ENCODE measurements at regions of chr1 and their contacts with region 1.

Region 1: GRCh38 chr1:26874896-26875295 is 11.9 kb downstream of the SFN start:
- DNase-seq: no peak
- ATAC-seq: no peak
- H3K4me3 ChIP-seq: no peak overlapping the region
- H3K27ac ChIP-seq: no peak overlapping the region
- H3K4me1 ChIP-seq: peaks cover 9 to 63% of the 10 kb centered on the region in 2 experiments
- H3K27me3 ChIP-seq: no peaks in the 10 kb centered on the region
- CTCF ChIP-seq: no peak
- POLR2A ChIP-seq: no peak
- RAD21 ChIP-seq: no peak

Region 2: GRCh38 chr1:26811057-26811456 is 63.8 kb before region 1 on chr1:
- CTCF ChIA-PET with region 1: interaction called, 11 read pairs
- POLR2A ChIA-PET with region 1: no interaction called
- RAD21 ChIA-PET with region 1: no interaction called
- intact Hi-C with region 1: loop called (anchors 1 kb)
- DNase-seq: no peak
- ATAC-seq: no peak
- H3K4me3 ChIP-seq: no peak overlapping the region
- H3K27ac ChIP-seq: no peak overlapping the region
- H3K4me1 ChIP-seq: peaks cover 0 to 14% of the 10 kb centered on the region in 2 experiments; a peak in 1 of 4 replicates
- H3K27me3 ChIP-seq: no peaks in the 10 kb centered on the region
- CTCF ChIP-seq: no peak
- POLR2A ChIP-seq: no peak
- RAD21 ChIP-seq: no peak

Region 3: DNA sequence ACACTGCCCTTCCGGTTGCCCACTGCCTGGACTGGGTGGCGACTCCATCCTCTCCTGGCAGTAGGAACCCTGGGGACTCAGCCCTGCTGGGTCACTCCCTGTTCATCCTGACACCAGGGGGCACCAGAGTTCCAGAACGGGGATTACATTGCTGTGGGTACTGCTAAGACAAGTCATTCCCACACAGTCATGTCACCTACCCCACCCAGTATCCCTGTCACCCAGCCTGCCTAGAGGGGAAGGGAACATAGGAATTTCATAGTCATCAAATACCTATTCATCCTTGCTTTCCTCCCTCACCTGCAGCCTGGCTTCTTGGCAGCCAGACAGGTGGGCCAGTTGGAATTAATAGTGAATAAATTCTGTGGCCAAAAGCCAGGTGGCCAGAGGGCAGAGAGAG is 21.7 kb before region 1 on chr1:
- CTCF ChIA-PET with region 1: interaction called, 6 read pairs
- POLR2A ChIA-PET with region 1: interaction called, 3 read pairs
- RAD21 ChIA-PET with region 1: interaction called, 3 read pairs
- intact Hi-C with region 1: loop called (anchors 1 kb)
- DNase-seq: peak; percentile 84
- ATAC-seq: peak; percentile 85
- H3K4me3 ChIP-seq: no peak overlapping the region
- H3K27ac ChIP-seq: peak overlapping the region; percentile 51
- H3K4me1 ChIP-seq: peaks cover 37 to 73% of the 10 kb centered on the region in 2 experiments
- H3K27me3 ChIP-seq: no peaks in the 10 kb centered on the region
- CTCF ChIP-seq: peak in 2 of 3 experiments; percentile 92; a peak in 4 of 6 replicates
- POLR2A ChIP-seq: no peak
- RAD21 ChIP-seq: no peak

Region 4: DNA sequence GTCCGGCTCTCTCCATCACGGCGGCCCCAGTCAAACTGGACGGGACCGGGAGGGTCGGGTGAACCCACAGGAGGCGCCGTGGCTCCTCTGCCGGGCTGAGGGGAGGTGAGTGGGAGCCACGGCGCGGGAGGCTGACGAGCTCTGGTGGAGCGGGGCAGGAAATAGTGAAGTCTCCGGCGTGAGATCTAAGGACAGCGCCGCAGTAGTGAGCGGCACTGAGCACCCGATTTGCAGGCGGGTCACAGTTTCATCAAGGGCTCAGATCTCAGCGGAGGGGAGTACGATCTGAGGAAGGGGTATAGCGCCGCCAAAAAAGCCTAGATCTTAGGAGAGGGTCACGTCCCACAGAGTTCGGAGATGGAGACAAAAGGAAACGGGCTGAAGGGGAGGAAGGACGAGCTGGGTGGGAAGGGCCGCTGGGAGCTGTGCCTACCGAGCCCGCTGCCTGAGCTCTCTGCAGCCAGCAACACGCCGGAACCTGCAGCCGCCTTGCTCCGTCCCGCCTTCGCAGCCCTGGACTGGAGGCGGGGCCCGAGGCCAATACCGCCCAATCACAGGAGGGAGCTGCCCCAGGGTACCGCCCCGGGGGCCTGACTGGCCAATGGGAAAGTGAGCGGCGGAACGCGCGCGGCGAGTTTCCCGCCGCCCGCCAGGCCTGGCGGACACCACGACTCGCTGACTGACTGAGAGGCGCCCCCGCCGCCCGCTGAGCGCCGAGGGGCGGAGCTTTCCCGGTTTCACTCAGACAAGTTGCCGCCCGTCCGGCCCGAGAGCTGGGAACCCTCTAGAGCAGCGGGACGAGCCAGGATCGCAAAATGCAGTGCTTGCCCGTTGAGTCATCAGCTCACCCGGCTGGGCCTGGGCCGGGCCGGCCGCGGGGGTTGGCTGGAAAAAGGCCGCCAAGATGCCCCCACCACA is 10.0 kb before region 1 on chr1:
- CTCF ChIA-PET with region 1: interaction called, 10 read pairs
- POLR2A ChIA-PET with region 1: interaction called, 10 read pairs
- RAD21 ChIA-PET with region 1: interaction called, 5 to 9 read pairs
- intact Hi-C with region 1: no loop called
- DNase-seq: peak; percentile 95
- ATAC-seq: peak; percentile 72
- H3K4me3 ChIP-seq: peak overlapping the region; percentile 88 to 96
- H3K27ac ChIP-seq: peak overlapping the region; percentile 100
- H3K4me1 ChIP-seq: peaks cover 42 to 62% of the 10 kb centered on the region in 2 experiments
- H3K27me3 ChIP-seq: no peaks in the 10 kb centered on the region
- CTCF ChIP-seq: no peak
- POLR2A ChIP-seq: peak; percentile 95
- RAD21 ChIP-seq: no peak

Region 5: DNA sequence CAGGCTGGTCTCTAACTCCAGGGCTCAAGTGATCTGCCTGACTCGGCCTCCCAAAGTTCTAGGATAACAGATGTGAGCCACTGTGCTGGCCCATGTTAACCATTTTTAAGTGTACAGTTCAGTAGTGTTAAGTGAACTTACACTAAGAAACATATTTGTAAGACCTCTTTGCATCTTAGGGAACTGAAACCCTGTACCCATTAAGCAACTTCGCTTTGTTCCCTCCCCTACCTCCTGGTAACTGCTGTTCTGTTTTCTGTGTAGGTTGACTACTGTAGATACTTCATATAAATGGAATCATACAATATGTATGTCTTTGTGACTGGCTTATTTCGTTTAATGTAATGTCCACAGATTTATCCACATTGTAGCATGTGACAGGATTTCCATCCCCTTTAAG is 57.6 kb after region 1 on chr1:
- CTCF ChIA-PET with region 1: no interaction called
- POLR2A ChIA-PET with region 1: no interaction called
- RAD21 ChIA-PET with region 1: no interaction called
- intact Hi-C with region 1: no loop called
- DNase-seq: no peak
- ATAC-seq: no peak
- H3K4me3 ChIP-seq: no peak overlapping the region
- H3K27ac ChIP-seq: no peak overlapping the region
- H3K4me1 ChIP-seq: no peaks in the 10 kb centered on the region
- H3K27me3 ChIP-seq: no peaks in the 10 kb centered on the region
- CTCF ChIP-seq: no peak
- POLR2A ChIP-seq: no peak
- RAD21 ChIP-seq: no peak